ENCODE measurements at regions of chr14 and their contacts with region 1.

Region 1: DNA sequence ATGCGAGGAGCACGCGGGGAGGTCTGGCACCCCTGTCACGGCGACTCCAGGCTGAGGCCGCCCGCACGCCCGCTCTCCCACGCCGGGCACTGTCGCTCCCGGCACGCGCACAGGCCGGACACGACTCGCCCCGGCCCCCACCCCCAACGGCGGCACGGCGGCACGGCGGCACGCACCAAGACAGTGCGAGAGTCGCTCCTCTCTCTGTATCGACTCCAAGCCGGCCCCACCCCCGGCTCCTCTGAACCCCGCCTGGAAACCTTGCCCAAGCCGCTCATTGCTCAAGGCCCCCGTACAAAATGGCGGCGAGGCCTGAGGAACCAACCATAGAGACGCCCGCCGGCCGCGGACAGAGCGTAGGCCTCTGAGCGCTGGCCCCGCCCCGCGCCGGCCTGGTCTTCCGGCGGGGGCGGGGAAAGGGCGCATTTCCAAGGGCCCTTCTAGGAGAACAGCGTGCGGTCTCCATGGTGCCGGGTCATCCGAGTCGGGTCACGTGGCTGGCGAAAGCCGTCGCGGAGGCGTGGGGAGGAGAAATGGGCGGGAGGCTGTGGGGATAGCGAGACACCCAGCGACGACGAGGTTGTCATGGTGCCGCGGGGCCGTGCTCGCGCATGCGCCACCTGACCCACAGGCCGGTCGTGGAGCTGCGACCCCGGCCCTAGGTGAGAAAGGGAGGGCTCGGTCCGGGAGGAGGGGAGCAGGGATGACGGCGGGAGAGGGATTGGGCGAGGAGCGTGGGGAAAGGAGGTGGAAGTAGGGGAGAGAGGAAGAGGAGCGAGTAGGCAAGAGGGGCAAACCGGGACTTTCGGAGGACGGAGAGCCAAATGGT is at the start of gene CIPC:
- DNase-seq: peak; percentile 97 to 99
- ATAC-seq: peak; percentile 89 to 99 (median 93)
- H3K4me3 ChIP-seq: peak within 1 kb of the TSS; percentile 98
- H3K4me3 Mint-ChIP-seq: peak within 1 kb of the TSS; percentile 96
- H3K27ac ChIP-seq: peak within 1 kb of the TSS; percentile 98
- H3K27ac Mint-ChIP-seq: peak within 1 kb of the TSS; percentile 88 to 98
- H3K4me1 ChIP-seq: peaks cover 19% of the 10 kb centered on the region
- H3K4me1 Mint-ChIP-seq: peaks cover 40 to 46% of the 10 kb centered on the region in 2 donors
- H3K27me3 ChIP-seq: no peaks in the 10 kb centered on the region
- H3K27me3 Mint-ChIP-seq: no peaks in the 10 kb centered on the region
- CTCF ChIP-seq: no peak
- total RNA-seq, gene CIPC: 7.1 to 10.0 (median 9.9) TPM

Region 2: GRCh38 chr14:76767681-76768656 is 329.9 kb before region 1 on chr14:
- intact Hi-C with region 1: loop called (anchors 5 kb)
- DNase-seq: peak; percentile 59 to 87
- ATAC-seq: peak; percentile 94 to 97 (median 94)
- H3K4me3 ChIP-seq: no peak overlapping the region
- H3K4me3 Mint-ChIP-seq: no peak overlapping the region
- H3K27ac ChIP-seq: peak overlapping the region; percentile 76
- H3K27ac Mint-ChIP-seq: peak overlapping the region; percentile 81 to 87
- H3K4me1 ChIP-seq: peaks cover 29% of the 10 kb centered on the region
- H3K4me1 Mint-ChIP-seq: peaks cover 0 to 24% of the 10 kb centered on the region in 2 donors
- H3K27me3 ChIP-seq: no peaks in the 10 kb centered on the region
- H3K27me3 Mint-ChIP-seq: no peaks in the 10 kb centered on the region
- CTCF ChIP-seq: no peak

Region 3: GRCh38 chr14:76876076-76876475 is 221.8 kb before region 1 on chr14:
- intact Hi-C with region 1: loop called (anchors 2 kb)
- DNase-seq: peak; percentile 30 to 73
- ATAC-seq: peak; percentile 46 to 86 (median 80)
- H3K4me3 ChIP-seq: no peak overlapping the region
- H3K4me3 Mint-ChIP-seq: no peak overlapping the region
- H3K27ac ChIP-seq: no peak overlapping the region
- H3K27ac Mint-ChIP-seq: no peak overlapping the region
- H3K4me1 ChIP-seq: no peaks in the 10 kb centered on the region
- H3K4me1 Mint-ChIP-seq: no peaks in the 10 kb centered on the region
- H3K27me3 ChIP-seq: no peaks in the 10 kb centered on the region
- H3K27me3 Mint-ChIP-seq: no peaks in the 10 kb centered on the region
- CTCF ChIP-seq: peak; percentile 86

Region 4: GRCh38 chr14:77124345-77125280 is 26.7 kb after region 1 on chr14:
- intact Hi-C with region 1: loop called (anchors 1 kb)
- DNase-seq: peak; percentile 72 to 88
- ATAC-seq: peak; percentile 87 to 91 (median 87)
- H3K4me3 ChIP-seq: peak overlapping the region; percentile 55
- H3K4me3 Mint-ChIP-seq: peak overlapping the region; percentile 76
- H3K27ac ChIP-seq: peak overlapping the region; percentile 38
- H3K27ac Mint-ChIP-seq: peak overlapping the region in 1 of 2 donors; percentile 57
- H3K4me1 ChIP-seq: peaks cover 59% of the 10 kb centered on the region
- H3K4me1 Mint-ChIP-seq: peaks cover 24 to 31% of the 10 kb centered on the region in 2 donors
- H3K27me3 ChIP-seq: peaks cover 5% of the 10 kb centered on the region
- H3K27me3 Mint-ChIP-seq: peaks cover 17 to 25% of the 10 kb centered on the region in 2 donors
- CTCF ChIP-seq: peak; percentile 74

Region 5: GRCh38 chr14:77376771-77377501 is 279.0 kb after region 1 on chr14 and contains the starts of genes SAMD15 and TMED8:
- intact Hi-C with region 1: loop called (anchors 1 kb)
- DNase-seq: peak; percentile 85 to 91
- ATAC-seq: peak; percentile 96 to 98 (median 97)
- H3K4me3 ChIP-seq: peak within 1 kb of the TSS; percentile 96
- H3K4me3 Mint-ChIP-seq: peak within 1 kb of the TSS; percentile 94
- H3K27ac ChIP-seq: peak within 1 kb of the TSS; percentile 74
- H3K27ac Mint-ChIP-seq: no peak within 1 kb of the TSS
- H3K4me1 ChIP-seq: peaks cover 13% of the 10 kb centered on the region
- H3K4me1 Mint-ChIP-seq: peaks cover 26 to 28% of the 10 kb centered on the region in 2 donors
- H3K27me3 ChIP-seq: no peaks in the 10 kb centered on the region
- H3K27me3 Mint-ChIP-seq: peaks cover 0 to 2% of the 10 kb centered on the region in 2 donors
- CTCF ChIP-seq: no peak
- total RNA-seq, gene SAMD15: 0.09 to 0.54 (median 0.40) TPM
- total RNA-seq, gene TMED8: 8.0 to 9.3 (median 9.1) TPM

Region 6: DNA sequence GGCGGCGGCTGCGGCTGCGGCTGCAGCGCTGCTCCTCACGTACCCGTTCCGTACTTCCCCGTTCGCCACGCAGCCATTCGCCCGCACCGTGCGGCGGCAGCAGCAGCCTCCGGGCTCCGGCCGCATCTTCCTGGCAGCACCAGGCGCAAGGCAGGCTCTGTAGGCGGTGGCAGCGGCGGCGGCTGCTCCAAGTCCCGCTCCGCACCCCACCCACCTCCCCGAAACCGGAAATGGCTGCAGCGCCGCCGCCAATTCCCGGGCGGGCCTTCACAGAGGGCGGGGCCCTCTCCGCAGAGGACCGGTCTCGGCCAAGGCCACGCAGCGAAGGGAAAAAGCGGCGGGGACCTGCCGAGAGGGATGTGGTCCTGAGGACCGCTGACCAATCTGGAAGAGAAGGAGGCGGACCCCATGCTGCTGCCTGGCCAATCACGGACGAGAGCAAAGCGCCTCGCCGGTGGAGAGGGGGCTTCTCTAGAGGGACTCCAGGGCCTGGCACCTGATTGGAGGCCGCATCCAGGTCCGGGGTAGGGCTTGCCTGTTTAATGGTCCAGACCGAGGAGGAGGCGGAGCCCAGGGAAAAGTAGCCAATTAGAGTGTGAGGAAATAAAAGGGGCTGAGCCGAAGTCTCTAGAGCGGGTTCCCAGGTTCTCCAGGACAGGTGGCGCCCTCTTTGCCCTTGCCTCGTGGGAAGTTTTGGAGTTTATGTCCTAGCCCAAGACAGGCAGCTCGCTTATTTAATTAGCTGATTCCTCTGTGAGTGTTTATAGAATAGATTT is 518.7 kb after region 1 on chr14 and contains the start of gene SPTLC2:
- intact Hi-C with region 1: loop called (anchors 5 kb)
- DNase-seq: peak; percentile 94 to 99
- ATAC-seq: peak; percentile 92 to 99 (median 94)
- H3K4me3 ChIP-seq: peak within 1 kb of the TSS; percentile 55
- H3K4me3 Mint-ChIP-seq: peak within 1 kb of the TSS; percentile 92
- H3K27ac ChIP-seq: peak within 1 kb of the TSS; percentile 55
- H3K27ac Mint-ChIP-seq: peak within 1 kb of the TSS; percentile 83 to 92
- H3K4me1 ChIP-seq: peaks cover 15% of the 10 kb centered on the region
- H3K4me1 Mint-ChIP-seq: peaks cover 32 to 48% of the 10 kb centered on the region in 2 donors
- H3K27me3 ChIP-seq: no peaks in the 10 kb centered on the region
- H3K27me3 Mint-ChIP-seq: no peaks in the 10 kb centered on the region
- CTCF ChIP-seq: no peak
- total RNA-seq, gene SPTLC2: 35.2 to 58.6 (median 50.4) TPM

Measured in natural killer cell (primary cell).